ENCODE measurements at regions of chr16 and their contacts with region 1.

Region 1: GRCh38 chr16:57530104-57530521 is 6.3 kb downstream of the CCDC102A start:
- DNase-seq: no peak
- ATAC-seq: peak; percentile 85
- H3K4me3 ChIP-seq: peak overlapping the region; percentile 17; the same call in 1 of the 2 replicates
- H3K27ac ChIP-seq: peak overlapping the region; percentile 21
- H3K4me1 ChIP-seq: peaks cover 37% of the 10 kb centered on the region
- H3K27me3 ChIP-seq: no peaks in the 10 kb centered on the region
- CTCF ChIP-seq: no peak
- EP300 ChIP-seq: no peak; a peak in 1 of 4 replicates
- POLR2A ChIP-seq: no peak
- RAD21 ChIP-seq: no peak

Region 2: GRCh38 chr16:57544119-57544653 is 14.1 kb after region 1 on chr16:
- CTCF ChIA-PET with region 1: interaction called, 3 read pairs
- POLR2A ChIA-PET with region 1: interaction called, 7 read pairs
- RAD21 ChIA-PET with region 1: interaction called, 7 read pairs
- SMC1A ChIA-PET with region 1: interaction called, 14 read pairs
- in situ Hi-C with region 1: no loop called
- intact Hi-C with region 1: no loop called
- DNase-seq: peak; percentile 95
- ATAC-seq: peak; percentile 81
- H3K4me3 ChIP-seq: peak overlapping the region; percentile 98
- H3K27ac ChIP-seq: peak overlapping the region; percentile 94
- H3K4me1 ChIP-seq: peaks cover 43% of the 10 kb centered on the region
- H3K27me3 ChIP-seq: no peaks in the 10 kb centered on the region
- CTCF ChIP-seq: no peak
- EP300 ChIP-seq: peak; percentile 99 to 100
- POLR2A ChIP-seq: peak; percentile 82
- RAD21 ChIP-seq: peak; percentile 23